Activated CD4-positive, alpha-beta T cell treated with anti-CD3 and anti-CD28 coated beads for 36 hours (primary cell): ENCODE measurements at regions of chr10 and their contacts with region 1.

Region 1: GRCh38 chr10:99430451-99431189 is at the start of gene GOT1:
- DNase-seq: peak; percentile 97
- ATAC-seq: peak; percentile 96
- H3K4me3 Mint-ChIP-seq: peak within 1 kb of the TSS; percentile 94
- H3K27ac Mint-ChIP-seq: peak within 1 kb of the TSS; percentile 98
- H3K4me1 Mint-ChIP-seq: peaks cover 32% of the 10 kb centered on the region
- H3K27me3 Mint-ChIP-seq: no peaks in the 10 kb centered on the region
- total RNA-seq, gene GOT1: 51.7 to 83.5 TPM

Region 2: DNA sequence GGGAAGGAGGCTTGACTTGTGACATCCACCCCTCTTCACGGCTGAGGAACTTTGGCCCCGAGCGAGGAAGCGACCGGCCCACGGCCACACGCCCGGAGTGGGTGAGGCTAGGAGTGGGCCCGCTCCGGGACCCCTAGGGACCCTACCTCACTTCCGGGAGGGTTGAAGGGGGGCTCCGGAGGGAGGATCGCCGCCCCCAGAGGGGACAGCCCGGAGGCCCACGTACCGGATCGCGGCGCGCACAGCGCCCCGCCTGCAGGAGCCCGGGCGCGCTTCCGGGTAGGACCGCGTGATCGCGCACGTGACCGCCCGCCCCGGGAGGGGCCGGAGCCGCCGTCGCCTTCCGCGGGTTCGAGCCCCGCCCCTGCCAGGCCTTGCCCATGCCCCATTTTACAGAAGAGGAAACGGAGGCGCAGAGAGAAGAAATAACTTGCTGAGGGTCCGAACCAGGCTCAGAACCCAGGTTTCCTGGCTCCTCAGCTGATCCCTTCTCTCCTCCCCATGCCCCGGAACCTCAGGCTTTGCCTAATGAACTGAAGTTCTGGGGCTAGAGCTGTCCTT is 983.9 kb before region 1 on chr10 and contains the start of gene HPS1:
- CTCF ChIA-PET with region 1: no interaction called
- POLR2A ChIA-PET with region 1: no interaction called
- intact Hi-C with region 1: loop called in 1 of 2 experiments (anchors 5 kb)
- DNase-seq: peak; percentile 92
- ATAC-seq: peak; percentile 93
- H3K4me3 Mint-ChIP-seq: peak within 1 kb of the TSS; percentile 93
- H3K27ac Mint-ChIP-seq: peak within 1 kb of the TSS; percentile 88
- H3K4me1 Mint-ChIP-seq: peaks cover 39% of the 10 kb centered on the region
- H3K27me3 Mint-ChIP-seq: peaks cover 5% of the 10 kb centered on the region
- total RNA-seq, gene HPS1: 51.9 to 53.2 TPM

Region 3: DNA sequence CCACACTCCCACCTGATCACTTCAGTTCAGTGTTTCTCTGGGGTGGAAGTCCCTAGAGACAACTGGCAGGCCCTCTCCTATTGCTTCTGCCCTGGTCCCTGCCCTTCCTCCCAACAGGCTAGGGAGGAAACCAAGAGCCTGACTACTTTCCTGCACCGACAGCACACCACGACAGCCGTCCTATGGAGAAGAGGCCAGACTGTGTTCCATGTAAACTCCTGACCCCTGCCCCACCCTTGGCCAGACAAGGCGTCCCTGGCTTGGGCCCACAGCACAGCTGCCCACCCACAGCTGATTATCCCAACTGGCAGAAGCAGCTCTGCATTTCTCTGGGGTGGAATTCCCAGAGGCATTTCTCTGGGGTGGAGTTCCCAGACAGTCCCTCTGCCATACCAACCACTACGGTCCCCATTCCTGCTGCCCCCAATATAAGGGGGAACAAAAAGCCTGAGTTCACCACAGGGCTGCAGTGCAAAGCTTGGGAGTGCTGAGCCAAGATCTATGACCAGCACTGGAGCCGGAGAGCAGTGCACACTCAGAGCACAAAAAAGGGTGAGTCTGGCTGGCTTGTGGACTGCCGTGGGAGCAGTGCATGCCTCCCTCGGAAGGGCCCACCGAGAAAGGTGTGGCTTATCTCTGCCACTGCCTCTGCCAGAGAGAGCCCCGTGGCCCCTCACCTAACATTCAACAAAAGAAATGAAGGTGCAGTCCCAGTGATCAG is 388.4 kb before region 1 on chr10:
- CTCF ChIA-PET with region 1: no interaction called
- POLR2A ChIA-PET with region 1: no interaction called
- intact Hi-C with region 1: no loop called
- DNase-seq: no peak
- ATAC-seq: no peak
- H3K4me3 Mint-ChIP-seq: no peak overlapping the region
- H3K27ac Mint-ChIP-seq: no peak overlapping the region
- H3K4me1 Mint-ChIP-seq: no peaks in the 10 kb centered on the region
- H3K27me3 Mint-ChIP-seq: no peaks in the 10 kb centered on the region

Region 4: GRCh38 chr10:99532687-99533495 is 102.3 kb after region 1 on chr10 and contains the start of gene NKX2-3:
- CTCF ChIA-PET with region 1: interaction called, 5 read pairs
- POLR2A ChIA-PET with region 1: no interaction called
- intact Hi-C with region 1: loop called in 1 of 2 experiments (anchors 5 kb)
- DNase-seq: peak; percentile 77
- ATAC-seq: peak; percentile 74
- H3K4me3 Mint-ChIP-seq: peak within 1 kb of the TSS; percentile 24
- H3K27ac Mint-ChIP-seq: no peak within 1 kb of the TSS
- H3K4me1 Mint-ChIP-seq: peaks cover 43% of the 10 kb centered on the region
- H3K27me3 Mint-ChIP-seq: peaks cover 84% of the 10 kb centered on the region
- total RNA-seq, gene NKX2-3: not detected

Region 5: GRCh38 chr10:99659031-99659867 is 228.6 kb after region 1 on chr10 and contains the start of gene ENTPD7:
- CTCF ChIA-PET with region 1: interaction called, 3 read pairs
- POLR2A ChIA-PET with region 1: interaction called, 5 read pairs
- intact Hi-C with region 1: loop called in 1 of 2 experiments (anchors 1 kb)
- DNase-seq: peak; percentile 96
- ATAC-seq: peak; percentile 99
- H3K4me3 Mint-ChIP-seq: peak within 1 kb of the TSS; percentile 84
- H3K27ac Mint-ChIP-seq: peak within 1 kb of the TSS; percentile 85
- H3K4me1 Mint-ChIP-seq: peaks cover 22% of the 10 kb centered on the region
- H3K27me3 Mint-ChIP-seq: peaks cover 12% of the 10 kb centered on the region
- total RNA-seq, gene ENTPD7: 2.5 to 2.7 TPM

Region 6: DNA sequence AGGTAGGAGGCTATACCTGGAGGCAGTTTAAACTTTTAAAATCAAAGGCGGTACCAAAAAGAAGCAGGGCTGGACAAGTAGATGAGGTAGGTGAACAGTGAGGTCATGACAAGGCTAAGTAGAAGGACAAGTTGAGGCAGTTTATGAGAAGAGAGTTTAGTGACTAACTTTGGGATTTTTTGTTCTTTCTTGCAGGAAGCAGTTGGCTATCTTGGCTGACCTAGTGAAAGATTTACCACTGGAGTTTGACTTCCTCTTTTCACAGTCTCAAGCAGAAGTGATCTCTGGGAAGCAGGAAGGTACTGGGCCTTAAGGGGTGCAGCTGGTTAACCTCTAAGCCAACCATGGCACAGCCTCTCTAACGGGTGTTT is 255.0 kb after region 1 on chr10:
- CTCF ChIA-PET with region 1: no interaction called
- POLR2A ChIA-PET with region 1: no interaction called
- intact Hi-C with region 1: no loop called
- DNase-seq: no peak
- ATAC-seq: no peak
- H3K4me3 Mint-ChIP-seq: no peak overlapping the region
- H3K27ac Mint-ChIP-seq: no peak overlapping the region
- H3K4me1 Mint-ChIP-seq: no peaks in the 10 kb centered on the region
- H3K27me3 Mint-ChIP-seq: no peaks in the 10 kb centered on the region

Region 7: DNA sequence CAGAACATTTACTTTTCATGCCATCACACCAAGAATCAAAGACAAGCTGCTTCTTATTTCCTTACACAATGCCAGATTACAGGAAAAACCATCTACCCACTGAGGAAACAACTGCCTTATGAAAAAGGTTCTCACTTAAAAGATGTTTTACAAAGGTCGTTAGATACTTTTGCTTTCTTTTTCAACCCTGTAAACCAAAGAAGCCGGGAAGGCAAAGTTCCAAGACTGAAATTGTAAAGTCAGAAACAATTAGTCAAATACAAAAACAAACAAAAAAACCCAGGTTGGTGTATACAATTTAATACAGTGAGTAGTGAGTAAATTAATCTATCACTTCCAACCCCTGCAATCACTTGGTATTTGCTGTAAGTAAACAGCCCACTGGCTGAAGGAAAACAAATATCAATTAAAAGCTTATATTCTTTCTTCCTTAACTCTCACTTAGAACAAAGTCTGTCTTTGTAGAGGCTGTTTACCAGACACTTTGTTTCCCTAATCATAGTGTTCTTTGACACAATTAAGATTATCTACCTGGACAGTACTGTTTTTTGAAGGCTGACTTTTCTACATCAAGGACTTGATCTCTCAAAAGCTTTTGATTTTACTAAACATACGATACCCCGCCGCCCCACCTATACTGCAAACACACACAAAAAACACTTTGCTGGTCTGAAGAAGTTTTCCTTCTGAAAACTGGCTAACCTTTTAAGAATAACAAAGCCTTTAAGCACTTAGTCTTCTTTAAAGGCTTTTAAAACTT is 737.1 kb after region 1 on chr10:
- CTCF ChIA-PET with region 1: no interaction called
- POLR2A ChIA-PET with region 1: no interaction called
- intact Hi-C with region 1: loop called in 1 of 2 experiments (anchors 5 kb)
- DNase-seq: no peak
- ATAC-seq: peak; percentile 38
- H3K4me3 Mint-ChIP-seq: peak overlapping the region; percentile 6
- H3K27ac Mint-ChIP-seq: peak overlapping the region; percentile 69
- H3K4me1 Mint-ChIP-seq: peaks cover 43% of the 10 kb centered on the region
- H3K27me3 Mint-ChIP-seq: no peaks in the 10 kb centered on the region